Right lobe of liver (tissue), 6 donors: ENCODE measurements at regions of chr22 and their contacts with region 1.

Region 1: DNA sequence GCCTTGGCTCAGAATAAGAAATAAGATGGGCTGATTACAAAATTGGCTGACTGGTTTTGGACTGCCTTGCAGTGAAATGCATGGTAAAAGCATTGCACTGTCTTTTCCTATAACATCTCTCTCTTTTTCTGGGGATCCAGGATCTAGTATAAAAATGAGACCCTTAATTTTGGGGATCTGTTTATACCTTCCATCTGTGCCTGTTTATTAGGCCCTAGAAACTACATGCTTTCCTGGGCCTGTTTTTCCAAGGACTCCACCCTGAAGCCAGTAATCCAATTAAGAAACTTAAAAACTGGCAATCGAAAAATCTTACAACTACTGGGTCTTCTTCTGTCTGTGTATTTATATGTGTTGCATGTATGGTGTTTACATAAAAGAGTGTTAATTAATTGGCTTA is 14.5 kb downstream of the HORMAD2 start:
- DNase-seq: no peak
- ATAC-seq: no peak
- H3K4me3 ChIP-seq: no peak overlapping the region
- H3K27ac ChIP-seq: no peak overlapping the region
- H3K4me1 ChIP-seq: no peaks in the 10 kb centered on the region
- H3K27me3 ChIP-seq: no peaks in the 10 kb centered on the region
- CTCF ChIP-seq: no peak
- POLR2A ChIP-seq: no peak

Region 2: GRCh38 chr22:29689880-29690213 is 405.0 kb before region 1 on chr22:
- intact Hi-C with region 1: loop called in 1 of 2 experiments (anchors 10 kb)
- DNase-seq: peak; percentile 61 to 72 (median 61)
- ATAC-seq: peak; percentile 67 to 83 (median 74)
- H3K4me3 ChIP-seq: no peak overlapping the region
- H3K27ac ChIP-seq: no peak overlapping the region
- H3K4me1 ChIP-seq: no peaks in the 10 kb centered on the region
- H3K27me3 ChIP-seq: no peaks in the 10 kb centered on the region
- CTCF ChIP-seq: peak; percentile 49 to 78 (median 64)
- POLR2A ChIP-seq: no peak

Region 3: DNA sequence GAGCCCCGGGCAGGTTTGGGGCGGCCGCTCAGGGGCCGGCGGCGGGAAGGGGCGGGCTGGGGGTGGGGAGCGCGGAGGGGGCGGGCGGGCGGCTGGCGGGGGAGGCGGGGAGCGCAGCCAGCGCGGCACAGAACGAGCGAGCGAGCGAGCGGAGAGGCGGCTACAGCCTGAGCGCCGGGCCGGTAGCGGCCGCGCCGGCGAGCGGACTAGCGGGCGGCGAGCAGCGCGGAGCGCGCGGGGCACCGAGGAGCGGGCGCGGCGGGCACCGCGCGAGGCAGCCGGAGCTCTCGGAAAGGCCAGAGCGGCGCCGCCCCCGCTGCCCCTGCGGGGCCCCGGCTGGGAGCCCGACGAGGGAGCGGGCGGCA is 374.9 kb before region 1 on chr22 and contains the start of gene CABP7:
- intact Hi-C with region 1: loop called in 1 of 2 experiments (anchors 5 kb)
- DNase-seq: no peak
- ATAC-seq: no peak
- H3K4me3 ChIP-seq: no peak within 1 kb of the TSS
- H3K27ac ChIP-seq: no peak within 1 kb of the TSS
- H3K4me1 ChIP-seq: peaks cover 0 to 6% (median 0%) of the 10 kb centered on the region in 4 donors
- H3K27me3 ChIP-seq: no peaks in the 10 kb centered on the region
- CTCF ChIP-seq: no peak
- POLR2A ChIP-seq: no peak
- total RNA-seq, gene CABP7: not detected